Common myeloid progenitor, CD34-positive (primary cell): ENCODE measurements at regions of chr11 and their contacts with region 1.

Region 1: DNA sequence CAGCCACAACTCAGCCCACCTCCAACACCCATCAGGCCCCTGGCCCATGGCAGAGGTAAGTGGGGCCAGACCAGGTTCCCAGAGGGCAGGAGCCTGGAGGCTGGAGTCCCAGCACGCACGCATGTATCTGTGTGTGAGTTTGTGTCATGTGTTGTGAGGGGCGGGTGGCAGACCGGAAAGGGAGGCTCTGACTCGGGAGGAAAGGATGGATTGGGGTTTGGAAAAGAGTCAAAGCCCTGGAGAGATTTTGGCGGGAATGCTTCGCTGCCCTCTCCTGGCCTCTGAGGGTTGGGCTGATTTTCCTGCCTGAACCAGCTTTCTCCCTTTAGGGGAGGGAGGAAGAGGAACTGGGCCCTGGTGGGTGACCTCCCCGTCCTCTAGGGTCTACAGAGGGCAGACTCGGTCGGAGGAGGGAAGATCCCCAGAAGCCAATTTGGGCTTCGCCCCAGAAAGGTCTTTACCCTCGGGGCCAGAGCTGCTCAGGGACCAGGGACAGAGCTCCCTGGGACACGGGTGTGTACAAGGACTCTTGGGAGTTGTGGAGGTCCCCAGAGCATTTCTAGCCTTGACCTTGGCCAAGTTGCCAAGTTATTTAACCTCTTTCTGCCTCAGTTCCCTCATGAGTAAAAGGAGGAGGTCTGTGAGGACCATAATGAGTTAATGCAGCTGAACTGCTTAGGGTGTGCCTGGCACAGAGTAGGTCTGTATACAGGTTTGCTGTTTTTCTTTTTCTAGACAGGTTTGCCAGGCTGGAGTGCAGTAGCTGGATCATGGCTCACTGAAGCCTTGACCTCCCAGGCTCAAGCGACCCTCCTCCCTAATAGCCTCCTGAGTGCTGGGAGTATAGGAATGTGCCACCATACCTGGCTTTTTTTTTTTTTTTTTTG is 6.9 kb downstream of the C11orf68 start:
- DNase-seq: no peak
- H3K4me3 ChIP-seq: no peak overlapping the region
- H3K27ac ChIP-seq: no peak overlapping the region
- H3K4me1 ChIP-seq: peaks cover 0 to 34% (median 27%) of the 10 kb centered on the region in 4 experiments
- H3K27me3 ChIP-seq: no peaks in the 10 kb centered on the region

Region 2: DNA sequence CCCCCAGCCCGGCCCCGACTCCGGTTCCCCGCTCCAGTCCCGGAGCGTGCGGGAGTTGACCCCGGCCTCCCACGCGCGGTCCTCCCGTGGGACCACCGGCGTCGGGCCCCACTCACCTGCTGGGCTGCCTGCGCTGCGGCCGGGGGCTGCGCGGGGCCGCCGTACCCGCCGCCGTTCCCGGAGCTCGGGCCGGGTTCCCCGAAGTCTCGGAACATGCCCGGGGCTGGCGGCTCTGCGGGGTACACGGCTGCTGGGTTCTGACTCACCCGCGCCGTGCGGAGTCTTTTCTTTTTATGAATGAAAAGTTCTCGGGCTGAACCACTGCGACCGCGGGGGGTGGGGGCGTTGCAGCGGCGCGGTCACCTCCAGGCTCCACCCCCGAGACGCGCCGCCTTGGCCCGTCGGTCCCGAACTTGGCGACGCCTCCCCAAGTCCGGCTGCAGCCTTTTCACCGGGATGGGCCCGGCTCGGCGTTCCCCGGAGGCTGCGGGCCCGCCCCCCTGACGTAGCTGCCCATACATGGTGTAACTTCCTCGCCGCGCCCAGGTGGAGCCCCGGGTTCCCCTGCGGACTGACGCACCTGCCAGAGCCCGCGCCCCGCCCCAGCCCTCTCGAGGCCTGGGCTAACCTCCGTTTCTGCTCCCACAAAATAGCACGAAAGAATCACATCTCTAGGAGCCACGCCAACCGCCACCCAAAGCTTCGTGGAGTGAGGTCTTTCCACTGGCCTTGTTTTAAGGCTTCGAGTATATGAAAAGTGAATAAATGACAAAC is 11.6 kb before region 1 on chr11 and contains the start of gene FOSL1:
- CTCF ChIA-PET with region 1: interaction called, 30 read pairs
- POLR2A ChIA-PET with region 1: interaction called, 5 read pairs
- DNase-seq: peak; percentile 95 to 98 (median 98)
- H3K4me3 ChIP-seq: peak within 1 kb of the TSS; percentile 55 to 89 (median 77)
- H3K27ac ChIP-seq: peak within 1 kb of the TSS; percentile 33 to 77
- H3K4me1 ChIP-seq: peaks cover 0 to 48% (median 39%) of the 10 kb centered on the region in 4 experiments
- H3K27me3 ChIP-seq: no peaks in the 10 kb centered on the region